HepG2 (cell line): ENCODE measurements at regions of chr2 and their contacts with region 1.

Region 1: GRCh38 chr2:108637304-108637669 is 82.0 kb upstream of the RANBP2 start:
- DNase-seq: peak; percentile 75
- ATAC-seq: peak; percentile 78
- H3K4me3 ChIP-seq: no peak overlapping the region
- H3K27ac ChIP-seq: peak overlapping the region; percentile 19
- H3K4me1 ChIP-seq: peaks cover 37% of the 10 kb centered on the region
- H3K27me3 ChIP-seq: no peaks in the 10 kb centered on the region
- CTCF ChIP-seq: no peak
- EP300 ChIP-seq: no peak
- POLR2A ChIP-seq: no peak
- RAD21 ChIP-seq: no peak

Region 2: GRCh38 chr2:108243566-108243965 is 393.7 kb before region 1 on chr2:
- CTCF ChIA-PET with region 1: no interaction called
- POLR2A ChIA-PET with region 1: no interaction called
- in situ Hi-C with region 1: no loop called
- intact Hi-C with region 1: no loop called
- DNase-seq: no peak
- ATAC-seq: no peak
- H3K4me3 ChIP-seq: no peak overlapping the region
- H3K27ac ChIP-seq: no peak overlapping the region
- H3K4me1 ChIP-seq: no peaks in the 10 kb centered on the region
- H3K27me3 ChIP-seq: no peaks in the 10 kb centered on the region
- CTCF ChIP-seq: no peak
- EP300 ChIP-seq: no peak
- POLR2A ChIP-seq: no peak
- RAD21 ChIP-seq: no peak

Region 3: GRCh38 chr2:108485253-108485652 is 152.0 kb before region 1 on chr2:
- CTCF ChIA-PET with region 1: no interaction called
- POLR2A ChIA-PET with region 1: no interaction called
- in situ Hi-C with region 1: no loop called
- intact Hi-C with region 1: loop called (anchors 5 kb)
- DNase-seq: no peak
- ATAC-seq: no peak
- H3K4me3 ChIP-seq: no peak overlapping the region
- H3K27ac ChIP-seq: no peak overlapping the region
- H3K4me1 ChIP-seq: no peaks in the 10 kb centered on the region
- H3K27me3 ChIP-seq: no peaks in the 10 kb centered on the region
- CTCF ChIP-seq: no peak
- EP300 ChIP-seq: no peak
- POLR2A ChIP-seq: no peak
- RAD21 ChIP-seq: no peak

Region 4: DNA sequence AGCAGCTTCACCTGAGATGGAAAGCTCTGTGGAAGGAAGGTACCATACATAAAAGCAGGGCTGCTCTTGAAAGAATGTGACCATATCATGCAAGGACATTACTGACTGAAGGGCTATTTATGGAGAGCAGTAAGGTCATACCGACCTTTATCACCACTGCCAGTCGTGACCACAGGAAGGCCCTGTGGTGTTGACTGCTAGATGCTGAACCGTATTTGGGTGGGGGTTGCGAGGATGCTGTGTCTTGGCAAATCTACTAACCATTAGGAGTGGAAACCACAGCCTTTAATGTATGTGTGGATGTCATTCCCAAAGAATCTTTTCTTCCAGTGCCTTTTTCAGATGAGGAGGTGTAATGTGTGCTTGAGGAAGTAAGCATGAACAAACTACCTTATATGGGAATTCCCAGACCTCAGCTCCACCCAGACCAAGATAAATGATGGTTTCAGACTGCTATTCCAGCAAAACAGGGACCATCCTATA is 42.3 kb before region 1 on chr2:
- CTCF ChIA-PET with region 1: no interaction called
- POLR2A ChIA-PET with region 1: no interaction called
- in situ Hi-C with region 1: no loop called
- intact Hi-C with region 1: no loop called
- DNase-seq: peak; percentile 64
- ATAC-seq: peak; percentile 67
- H3K4me3 ChIP-seq: no peak overlapping the region
- H3K27ac ChIP-seq: no peak overlapping the region
- H3K4me1 ChIP-seq: peaks cover 43% of the 10 kb centered on the region
- H3K27me3 ChIP-seq: no peaks in the 10 kb centered on the region
- CTCF ChIP-seq: no peak
- EP300 ChIP-seq: no peak
- POLR2A ChIP-seq: no peak
- RAD21 ChIP-seq: no peak

Region 5: GRCh38 chr2:108607706-108608301 is 29.5 kb before region 1 on chr2:
- CTCF ChIA-PET with region 1: interaction called, 9 read pairs
- POLR2A ChIA-PET with region 1: no interaction called
- in situ Hi-C with region 1: no loop called
- intact Hi-C with region 1: loop called (anchors 2 kb)
- DNase-seq: peak; percentile 42
- ATAC-seq: peak; percentile 82
- H3K4me3 ChIP-seq: no peak overlapping the region
- H3K27ac ChIP-seq: no peak overlapping the region
- H3K4me1 ChIP-seq: 0 out of 2 replicates have a peak, but pooled peaks cover 1% of the 10 kb centered on the region
- H3K27me3 ChIP-seq: no peaks in the 10 kb centered on the region
- CTCF ChIP-seq: peak; percentile 51
- EP300 ChIP-seq: no peak
- POLR2A ChIP-seq: no peak
- RAD21 ChIP-seq: peak; percentile 20; the same call in 1 of the 2 replicates